H1 (cell line): ENCODE measurements at regions of chr5 and their contacts with region 1.

Region 1: GRCh38 chr5:17189381-17190036 is 27.9 kb upstream of the BASP1 start:
- DNase-seq: peak; percentile 66 to 93
- H3K4me3 ChIP-seq: no peak overlapping the region
- H3K27ac ChIP-seq: no peak overlapping the region
- H3K4me1 ChIP-seq: peaks cover 0 to 8% (median 2%) of the 10 kb centered on the region in 4 experiments; a peak in 4 of 7 replicates
- H3K27me3 ChIP-seq: no peaks in the 10 kb centered on the region
- CTCF ChIP-seq: peak; percentile 12 to 86 (median 79)
- EP300 ChIP-seq: no peak
- POLR2A ChIP-seq: no peak
- RAD21 ChIP-seq: peak; percentile 83 to 90

Region 2: GRCh38 chr5:16666883-16667398 is 522.6 kb before region 1 on chr5:
- CTCF ChIA-PET with region 1: interaction called, 18 read pairs
- POLR2A ChIA-PET with region 1: no interaction called
- DNase-seq: no peak
- H3K4me3 ChIP-seq: no peak overlapping the region
- H3K27ac ChIP-seq: no peak overlapping the region
- H3K4me1 ChIP-seq: no peaks in the 10 kb centered on the region
- H3K27me3 ChIP-seq: no peaks in the 10 kb centered on the region
- CTCF ChIP-seq: peak; percentile 18 to 59 (median 36)
- EP300 ChIP-seq: no peak
- POLR2A ChIP-seq: 0 out of 3 replicates have a peak, but pooled peaks of 1 of the 2 experiments have one; percentile 18
- RAD21 ChIP-seq: peak; percentile 55 to 62

Region 3: DNA sequence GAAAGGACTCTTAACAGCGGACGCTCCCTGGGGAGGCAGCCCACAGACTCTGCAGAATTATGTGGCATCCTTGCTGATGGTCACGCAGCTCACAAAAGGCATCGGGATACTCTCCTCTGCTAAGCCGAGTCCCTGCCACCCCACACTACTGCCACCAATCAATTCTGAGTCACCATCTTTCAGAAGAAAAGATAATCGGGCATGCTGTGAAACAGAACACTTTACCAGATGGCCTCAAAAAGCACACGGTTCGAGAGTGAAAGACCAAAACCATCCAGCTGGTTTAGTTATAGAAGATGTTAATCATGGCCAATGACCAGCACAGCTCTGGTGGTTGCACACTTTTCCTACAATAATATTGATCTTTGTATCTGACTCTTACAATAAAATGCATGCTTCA is 389.7 kb before region 1 on chr5:
- CTCF ChIA-PET with region 1: interaction called, 11 read pairs
- POLR2A ChIA-PET with region 1: interaction called, 3 read pairs
- DNase-seq: no peak
- H3K4me3 ChIP-seq: no peak overlapping the region
- H3K27ac ChIP-seq: no peak overlapping the region
- H3K4me1 ChIP-seq: peaks cover 0 to 3% (median under 1%) of the 10 kb centered on the region in 4 experiments; a peak in 2 of 7 replicates
- H3K27me3 ChIP-seq: no peaks in the 10 kb centered on the region
- CTCF ChIP-seq: no peak
- EP300 ChIP-seq: no peak
- POLR2A ChIP-seq: no peak
- RAD21 ChIP-seq: no peak

Region 4: GRCh38 chr5:16826379-16827125 is 363.0 kb before region 1 on chr5:
- CTCF ChIA-PET with region 1: interaction called, 11 read pairs
- POLR2A ChIA-PET with region 1: no interaction called
- DNase-seq: no peak
- H3K4me3 ChIP-seq: no peak overlapping the region
- H3K27ac ChIP-seq: no peak overlapping the region; the same call in 1 of the 2 replicates
- H3K4me1 ChIP-seq: no peaks in the 10 kb centered on the region
- H3K27me3 ChIP-seq: no peaks in the 10 kb centered on the region
- CTCF ChIP-seq: no peak
- EP300 ChIP-seq: no peak
- POLR2A ChIP-seq: no peak
- RAD21 ChIP-seq: no peak

Region 5: DNA sequence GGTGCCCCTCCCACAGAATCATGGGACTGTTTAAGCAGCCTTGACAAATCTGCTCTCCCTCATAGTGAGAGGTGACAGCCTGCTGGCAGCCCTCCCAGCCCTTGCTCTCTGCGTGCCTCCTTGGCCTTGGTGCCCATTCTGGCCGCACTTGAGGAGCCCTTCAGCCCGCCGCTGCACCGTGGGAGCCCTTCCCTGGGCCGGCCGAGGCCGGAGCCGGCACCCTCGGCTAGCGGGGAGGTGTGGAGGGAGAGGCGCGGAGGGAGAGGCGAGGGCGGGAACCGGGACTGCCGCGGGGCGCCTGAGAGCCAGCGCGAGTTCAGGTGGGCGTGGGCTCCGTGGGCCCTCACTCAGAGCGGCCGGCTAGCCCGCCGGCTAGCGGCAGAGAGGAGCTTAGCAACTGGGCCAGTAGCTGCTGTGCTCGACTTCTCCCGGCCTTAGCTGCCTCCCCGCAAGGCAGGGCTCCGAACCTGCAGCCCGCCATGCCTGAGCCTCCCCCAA is 127.5 kb before region 1 on chr5:
- CTCF ChIA-PET with region 1: interaction called, 11 read pairs
- POLR2A ChIA-PET with region 1: no interaction called
- DNase-seq: no peak
- H3K4me3 ChIP-seq: no peak overlapping the region
- H3K27ac ChIP-seq: no peak overlapping the region
- H3K4me1 ChIP-seq: peaks cover 0 to 4% (median 0%) of the 10 kb centered on the region in 4 experiments; a peak in 3 of 7 replicates
- H3K27me3 ChIP-seq: no peaks in the 10 kb centered on the region
- CTCF ChIP-seq: no peak
- EP300 ChIP-seq: no peak
- POLR2A ChIP-seq: no peak
- RAD21 ChIP-seq: no peak

Region 6: GRCh38 chr5:17204133-17204489 is 14.6 kb after region 1 on chr5:
- CTCF ChIA-PET with region 1: interaction called, 59 read pairs
- POLR2A ChIA-PET with region 1: interaction called, 3 read pairs
- DNase-seq: no peak
- H3K4me3 ChIP-seq: no peak overlapping the region
- H3K27ac ChIP-seq: no peak overlapping the region
- H3K4me1 ChIP-seq: peaks cover 0 to 2% (median 0%) of the 10 kb centered on the region in 4 experiments; a peak in 2 of 7 replicates
- H3K27me3 ChIP-seq: no peaks in the 10 kb centered on the region
- CTCF ChIP-seq: no peak
- EP300 ChIP-seq: no peak
- POLR2A ChIP-seq: no peak
- RAD21 ChIP-seq: no peak

Region 7: DNA sequence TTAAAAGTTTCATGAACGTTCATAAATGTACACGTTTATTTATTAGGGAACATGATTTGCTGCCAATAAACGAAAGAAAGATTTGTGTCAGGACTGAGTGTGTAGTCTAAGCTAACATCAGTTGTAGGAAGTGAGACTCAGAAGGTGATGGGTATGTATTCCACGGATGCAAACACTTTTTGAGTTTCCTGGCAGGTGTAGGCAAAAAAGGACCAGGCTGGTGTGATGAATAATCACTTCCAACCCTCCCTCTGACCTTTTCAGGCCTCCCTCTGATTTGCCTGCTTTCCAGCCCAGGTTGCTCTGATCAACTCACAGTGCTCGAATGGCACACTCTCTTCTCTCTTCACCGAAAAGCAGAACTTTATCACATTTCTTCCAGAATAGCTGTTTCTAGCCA is 79.7 kb after region 1 on chr5:
- CTCF ChIA-PET with region 1: no interaction called
- POLR2A ChIA-PET with region 1: no interaction called
- DNase-seq: no peak
- H3K4me3 ChIP-seq: no peak overlapping the region
- H3K27ac ChIP-seq: no peak overlapping the region
- H3K4me1 ChIP-seq: peaks cover 0 to 3% (median 1%) of the 10 kb centered on the region in 4 experiments; a peak in 3 of 7 replicates
- H3K27me3 ChIP-seq: no peaks in the 10 kb centered on the region
- CTCF ChIP-seq: no peak
- EP300 ChIP-seq: no peak
- POLR2A ChIP-seq: no peak
- RAD21 ChIP-seq: no peak

Region 8: DNA sequence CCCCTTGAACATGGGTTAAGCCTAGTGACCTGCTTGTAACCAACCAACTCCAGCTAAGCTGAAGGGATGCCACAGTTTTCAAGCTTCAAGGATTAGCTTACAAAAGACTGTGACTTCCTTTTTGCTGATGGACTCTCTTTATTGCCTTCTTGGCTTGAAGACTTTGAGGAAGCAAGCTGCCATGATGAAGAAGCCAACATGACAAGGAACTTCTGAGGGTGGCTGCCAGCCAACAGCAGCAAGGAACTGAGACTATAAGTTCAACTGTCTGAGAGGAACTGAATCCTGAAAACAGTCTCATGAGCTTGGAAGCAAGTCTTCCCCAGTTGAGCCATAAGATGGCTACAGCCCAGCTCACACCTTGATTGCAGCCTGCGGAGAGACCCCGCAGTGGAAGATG is 192.4 kb after region 1 on chr5:
- CTCF ChIA-PET with region 1: no interaction called
- POLR2A ChIA-PET with region 1: no interaction called
- DNase-seq: no peak
- H3K4me3 ChIP-seq: no peak overlapping the region
- H3K27ac ChIP-seq: no peak overlapping the region
- H3K4me1 ChIP-seq: peaks cover 0 to 3% (median 0%) of the 10 kb centered on the region in 4 experiments; a peak in 1 of 7 replicates
- H3K27me3 ChIP-seq: no peaks in the 10 kb centered on the region
- CTCF ChIP-seq: no peak
- EP300 ChIP-seq: no peak
- POLR2A ChIP-seq: no peak
- RAD21 ChIP-seq: no peak

Region 9: GRCh38 chr5:17436761-17437221 is 247.3 kb after region 1 on chr5:
- CTCF ChIA-PET with region 1: no interaction called
- POLR2A ChIA-PET with region 1: no interaction called
- DNase-seq: no peak
- H3K4me3 ChIP-seq: no peak overlapping the region
- H3K27ac ChIP-seq: no peak overlapping the region
- H3K4me1 ChIP-seq: no peaks in the 10 kb centered on the region
- H3K27me3 ChIP-seq: no peaks in the 10 kb centered on the region
- CTCF ChIP-seq: no peak
- EP300 ChIP-seq: no peak
- POLR2A ChIP-seq: no peak
- RAD21 ChIP-seq: no peak